Activated T-helper 2 cell treated with anti-CD3 and anti-CD28 coated beads, Interferon-gamma antibody, Interleukin-2, Interleukin-4, amounts not matched to agents 10 μg/mL and 5 μg/mL and 100 μg/mL, durations not matched to agents 14 hours and 24 hours and 36 hours (primary cell): ENCODE measurements at regions of chr9 and their contacts with region 1.

Region 1: GRCh38 chr9:37465249-37466036 is at the start of gene ZBTB5:
- DNase-seq: peak; percentile 98
- H3K4me3 Mint-ChIP-seq: peak within 1 kb of the TSS; percentile 96
- H3K27ac Mint-ChIP-seq: peak within 1 kb of the TSS; percentile 99
- H3K4me1 Mint-ChIP-seq: peaks cover 25% of the 10 kb centered on the region
- H3K27me3 Mint-ChIP-seq: no peaks in the 10 kb centered on the region
- total RNA-seq, gene ZBTB5: 10.6 and 11.0 TPM in 2 replicates

Region 2: GRCh38 chr9:37119907-37120842 is 345.3 kb before region 1 on chr9 and contains the start of gene ZCCHC7:
- intact Hi-C with region 1: loop called (anchors 1 kb)
- DNase-seq: peak; percentile 95
- H3K4me3 Mint-ChIP-seq: peak within 1 kb of the TSS; percentile 98
- H3K27ac Mint-ChIP-seq: peak within 1 kb of the TSS; percentile 99
- H3K4me1 Mint-ChIP-seq: peaks cover 23% of the 10 kb centered on the region
- H3K27me3 Mint-ChIP-seq: no peaks in the 10 kb centered on the region
- total RNA-seq, gene ZCCHC7: 22.1 and 26.1 TPM in 2 replicates

Region 3: GRCh38 chr9:37422289-37423104 is 42.9 kb before region 1 on chr9 and contains the start of gene GRHPR:
- intact Hi-C with region 1: loop called (anchors 1 kb)
- DNase-seq: peak; percentile 84
- H3K4me3 Mint-ChIP-seq: peak within 1 kb of the TSS; percentile 96
- H3K27ac Mint-ChIP-seq: peak within 1 kb of the TSS; percentile 96
- H3K4me1 Mint-ChIP-seq: peaks cover 12% of the 10 kb centered on the region
- H3K27me3 Mint-ChIP-seq: no peaks in the 10 kb centered on the region
- total RNA-seq, gene GRHPR: 75.4 and 77.4 TPM in 2 replicates

Region 4: DNA sequence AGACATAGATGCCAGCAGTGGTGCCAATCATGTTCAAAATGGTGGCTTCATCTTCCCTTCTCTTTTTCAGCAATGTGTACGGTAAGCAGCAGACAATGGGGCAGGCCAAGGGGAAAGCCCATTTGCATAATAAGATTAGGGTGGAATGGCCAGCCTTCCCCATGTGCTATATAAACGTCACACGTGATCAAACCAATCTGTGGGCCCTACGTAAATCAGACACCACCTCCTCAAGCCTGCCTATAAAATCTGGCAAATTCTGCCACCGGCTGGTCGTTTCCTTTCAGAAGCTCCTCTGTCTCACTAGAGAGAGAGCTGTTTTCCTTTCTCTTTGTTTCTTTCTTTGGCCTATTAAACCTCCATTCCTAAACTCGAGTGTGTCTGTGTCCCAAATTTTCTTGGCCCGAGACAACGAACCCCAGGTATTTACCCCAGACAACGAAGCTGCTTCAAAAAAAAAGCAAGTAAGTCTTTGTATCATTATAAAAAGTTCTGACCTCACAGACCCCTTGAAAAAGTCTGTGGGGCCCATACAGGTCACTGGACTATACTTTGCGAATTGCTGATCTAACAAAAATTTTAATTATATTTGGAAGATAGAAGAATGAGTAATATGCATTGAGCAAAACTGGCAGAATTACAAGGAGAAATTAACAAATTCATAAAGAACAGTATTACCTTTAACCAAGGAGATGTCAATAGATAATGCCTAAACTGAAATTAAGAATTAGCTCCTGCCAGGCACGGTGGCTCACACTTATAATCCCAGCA is 15.4 kb before region 1 on chr9:
- intact Hi-C with region 1: no loop called
- DNase-seq: no peak
- H3K4me3 Mint-ChIP-seq: no peak overlapping the region
- H3K27ac Mint-ChIP-seq: no peak overlapping the region
- H3K4me1 Mint-ChIP-seq: peaks cover 14% of the 10 kb centered on the region
- H3K27me3 Mint-ChIP-seq: no peaks in the 10 kb centered on the region

Region 5: DNA sequence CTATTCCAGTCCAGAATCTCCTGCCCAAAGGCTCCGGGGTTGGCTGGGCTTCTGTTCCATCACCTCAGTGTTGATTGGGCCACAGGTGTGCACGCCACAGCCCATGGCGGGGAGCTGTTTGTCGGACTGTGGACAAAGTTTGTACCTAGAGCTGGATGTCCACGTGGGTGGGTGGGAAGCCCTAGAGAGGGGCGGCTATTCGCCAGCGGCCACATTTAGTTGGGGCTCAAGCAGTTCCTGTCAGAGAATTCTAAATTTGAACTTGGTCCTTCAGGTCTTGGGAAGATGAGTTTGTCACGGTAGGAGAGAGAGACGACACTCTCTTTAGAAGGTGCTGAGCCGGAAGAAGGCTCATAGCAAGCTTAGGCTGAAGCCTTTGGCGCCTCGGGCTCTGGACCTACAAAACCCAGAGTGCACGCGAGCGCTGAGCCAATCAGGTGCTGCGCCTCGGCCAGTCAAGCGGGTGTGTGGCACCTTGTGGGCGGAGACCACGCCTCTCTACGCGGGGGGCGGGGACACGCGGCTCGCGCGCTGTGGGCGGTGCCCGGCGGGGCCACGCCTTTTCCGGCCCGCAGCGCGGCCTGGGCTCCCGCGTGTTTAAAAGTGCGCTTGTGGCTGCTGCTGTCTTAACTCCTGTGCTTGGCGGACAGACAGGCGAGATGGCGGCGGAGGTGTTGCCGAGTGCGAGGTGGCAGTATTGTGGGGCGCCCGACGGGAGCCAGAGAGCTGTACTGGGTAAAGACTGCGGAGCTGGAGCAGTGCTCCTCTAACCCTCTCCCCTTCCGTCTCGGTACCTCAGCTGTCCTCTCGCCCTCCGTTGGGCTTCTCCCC is 20.2 kb after region 1 on chr9 and contains the start of gene POLR1E:
- intact Hi-C with region 1: loop called (anchors 1 kb)
- DNase-seq: peak; percentile 95
- H3K4me3 Mint-ChIP-seq: peak within 1 kb of the TSS; percentile 100
- H3K27ac Mint-ChIP-seq: peak within 1 kb of the TSS; percentile 95
- H3K4me1 Mint-ChIP-seq: peaks cover 33% of the 10 kb centered on the region
- H3K27me3 Mint-ChIP-seq: peaks cover 5% of the 10 kb centered on the region
- total RNA-seq, gene POLR1E: 48.0 and 49.4 TPM in 2 replicates

Region 6: DNA sequence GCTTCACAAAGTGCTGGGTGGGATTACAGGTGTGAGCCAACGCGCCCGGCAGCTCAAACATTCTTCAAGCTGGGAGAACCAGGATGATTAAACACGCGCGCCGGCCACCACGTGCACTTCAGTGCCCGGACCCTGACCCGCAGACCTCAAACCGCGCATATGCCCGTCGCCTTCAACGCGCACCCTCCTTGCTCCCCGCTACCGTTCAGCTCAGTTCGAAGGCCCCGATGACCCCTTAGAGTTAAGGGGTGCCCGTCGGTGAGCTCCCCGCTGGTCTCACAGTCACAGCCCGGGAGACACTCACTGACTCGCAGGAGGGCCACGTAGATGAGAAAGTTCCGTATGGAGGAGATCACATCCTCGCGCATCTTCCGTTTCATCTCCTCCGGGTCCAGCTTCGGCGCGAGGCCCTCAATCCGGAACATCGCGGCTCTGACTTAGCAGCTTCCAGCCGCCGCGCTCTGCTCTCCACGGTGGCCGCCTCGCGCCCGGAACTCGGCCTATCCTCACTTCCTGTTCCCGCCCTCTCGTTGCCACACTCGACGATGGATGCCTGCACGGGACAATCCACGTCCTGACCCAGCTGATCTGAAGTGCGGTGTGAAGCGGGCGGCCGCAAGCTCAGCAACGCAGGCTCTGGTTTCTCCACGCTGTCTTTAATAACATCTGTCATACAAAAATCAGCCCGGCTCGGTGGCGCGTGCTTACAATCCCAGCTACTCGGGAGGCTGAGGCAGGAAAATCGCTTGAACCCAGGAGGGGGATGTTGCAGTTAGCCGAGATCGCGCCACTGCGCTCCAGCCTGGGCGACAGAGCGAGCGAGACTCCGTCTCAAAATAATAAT is 126.9 kb after region 1 on chr9 and contains the start of gene TOMM5:
- intact Hi-C with region 1: loop called (anchors 5 kb)
- DNase-seq: peak; percentile 89
- H3K4me3 Mint-ChIP-seq: peak within 1 kb of the TSS; percentile 98
- H3K27ac Mint-ChIP-seq: peak within 1 kb of the TSS; percentile 97
- H3K4me1 Mint-ChIP-seq: peaks cover 22% of the 10 kb centered on the region
- H3K27me3 Mint-ChIP-seq: peaks cover 16% of the 10 kb centered on the region
- total RNA-seq, gene TOMM5: 153 and 155 TPM in 2 replicates

Region 7: GRCh38 chr9:37602817-37603216 is 137.4 kb after region 1 on chr9:
- intact Hi-C with region 1: no loop called
- DNase-seq: no peak
- H3K4me3 Mint-ChIP-seq: no peak overlapping the region
- H3K27ac Mint-ChIP-seq: no peak overlapping the region
- H3K4me1 Mint-ChIP-seq: no peaks in the 10 kb centered on the region
- H3K27me3 Mint-ChIP-seq: peaks cover 43% of the 10 kb centered on the region

Region 8: DNA sequence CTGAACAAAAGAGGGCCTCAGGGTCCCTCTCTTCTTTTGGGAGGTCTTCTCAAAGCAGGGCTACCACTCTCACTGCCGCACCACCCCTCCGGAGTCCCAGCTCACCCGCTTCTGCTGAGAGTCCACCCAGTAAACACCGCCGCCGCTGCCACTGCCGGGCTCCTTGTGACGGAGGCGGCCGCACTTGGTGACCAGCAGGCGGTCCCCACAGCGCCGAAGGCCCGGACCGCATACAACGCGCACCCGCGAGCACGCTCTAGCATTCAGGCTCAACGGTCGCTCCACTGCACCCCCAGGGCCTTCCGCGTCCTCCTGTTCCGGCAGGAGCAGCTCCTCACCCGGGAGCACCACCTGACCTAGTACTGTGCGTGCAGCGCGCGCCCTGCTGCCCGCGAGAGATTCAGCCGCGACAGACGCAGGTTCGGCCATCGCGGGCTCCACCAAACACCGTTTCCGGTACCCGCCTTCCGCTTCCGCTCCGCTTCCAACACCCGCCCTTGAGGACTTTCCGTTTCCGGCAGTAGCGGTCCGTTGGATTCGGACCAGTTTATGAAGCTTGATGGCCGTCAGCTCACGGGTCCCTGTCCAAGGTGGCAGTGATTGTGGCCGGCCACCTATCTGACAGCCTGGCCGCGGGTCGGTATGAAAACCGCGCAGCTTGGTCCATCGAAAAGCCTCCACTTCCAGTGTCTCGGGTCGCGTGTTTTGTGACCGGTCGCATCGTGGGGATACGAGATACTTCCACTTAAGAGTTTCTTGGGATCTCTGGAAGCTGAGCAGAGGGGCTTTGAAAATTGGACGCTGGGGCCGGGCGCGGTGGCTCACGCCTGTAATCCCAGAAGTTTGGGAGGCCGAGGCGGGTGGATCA is 319.4 kb after region 1 on chr9 and contains the start of gene EXOSC3:
- intact Hi-C with region 1: loop called (anchors 10 kb)
- DNase-seq: peak; percentile 85
- H3K4me3 Mint-ChIP-seq: peak within 1 kb of the TSS; percentile 98
- H3K27ac Mint-ChIP-seq: peak within 1 kb of the TSS; percentile 96
- H3K4me1 Mint-ChIP-seq: peaks cover 29% of the 10 kb centered on the region
- H3K27me3 Mint-ChIP-seq: no peaks in the 10 kb centered on the region
- total RNA-seq, gene EXOSC3: 85.8 and 86.3 TPM in 2 replicates